PC-3 (cell line): ENCODE measurements at regions of chr17 and their contacts with region 1.

Region 1: DNA sequence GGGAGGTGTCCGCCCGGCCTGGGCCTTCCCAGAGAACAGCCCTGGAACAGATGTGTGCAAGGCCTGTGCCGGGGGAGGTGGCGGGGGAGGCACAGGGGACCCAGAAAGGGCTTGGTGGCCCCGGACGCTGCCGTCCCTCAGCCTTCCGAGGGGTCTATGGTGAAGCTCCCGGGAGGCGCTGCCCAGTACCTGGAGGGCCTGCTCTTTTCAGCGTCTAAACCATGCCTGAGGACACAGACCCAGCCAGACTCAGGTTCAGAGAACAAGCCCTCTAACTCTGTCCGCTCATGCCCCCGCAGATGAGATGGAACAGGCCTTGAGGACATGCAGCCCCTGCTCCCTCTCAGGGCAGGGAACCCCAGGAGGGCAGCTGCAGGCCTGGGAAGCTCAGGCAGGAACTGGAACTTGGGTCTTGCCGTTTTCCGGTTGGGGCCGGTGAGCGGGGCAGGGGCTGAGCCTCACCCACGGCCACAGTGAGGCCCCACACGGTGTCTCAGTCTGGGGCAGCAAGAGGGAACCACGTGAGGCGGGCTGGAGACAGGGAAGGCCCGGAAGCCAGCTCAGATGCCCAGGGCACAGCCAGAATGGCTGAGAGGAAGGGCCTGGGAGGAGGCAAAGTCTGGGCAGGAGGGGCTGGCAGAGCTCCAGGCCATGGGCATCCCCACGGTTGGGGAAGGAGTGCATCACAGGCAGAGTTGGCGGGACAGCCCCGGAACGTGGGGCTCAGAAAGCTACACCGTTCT is 12.5 kb downstream of the SLC16A3 start:
- DNase-seq: peak; percentile 74
- ATAC-seq: peak; percentile 51
- H3K4me3 ChIP-seq: no peak overlapping the region
- H3K27ac ChIP-seq: peak overlapping the region; percentile 68
- H3K4me1 ChIP-seq: peaks cover 42% of the 10 kb centered on the region
- H3K27me3 ChIP-seq: no peaks in the 10 kb centered on the region
- CTCF ChIP-seq: no peak

Region 2: GRCh38 chr17:82205719-82206508 is 35.4 kb before region 1 on chr17:
- CTCF ChIA-PET with region 1: interaction called, 7 read pairs
- POLR2A ChIA-PET with region 1: interaction called, 5 read pairs
- intact Hi-C with region 1: loop called (anchors 5 kb)
- DNase-seq: peak; percentile 95
- ATAC-seq: peak; percentile 70
- H3K4me3 ChIP-seq: peak overlapping the region; percentile 50
- H3K27ac ChIP-seq: peak overlapping the region; percentile 90
- H3K4me1 ChIP-seq: peaks cover 30% of the 10 kb centered on the region
- H3K27me3 ChIP-seq: no peaks in the 10 kb centered on the region
- CTCF ChIP-seq: peak; percentile 94

Region 3: GRCh38 chr17:82273327-82274133 is 32.2 kb after region 1 on chr17 and contains the start of gene CSNK1D:
- CTCF ChIA-PET with region 1: no interaction called
- POLR2A ChIA-PET with region 1: no interaction called
- intact Hi-C with region 1: no loop called
- DNase-seq: peak; percentile 81
- ATAC-seq: peak; percentile 81
- H3K4me3 ChIP-seq: peak within 1 kb of the TSS; percentile 98
- H3K27ac ChIP-seq: peak within 1 kb of the TSS; percentile 81
- H3K4me1 ChIP-seq: peaks cover 49% of the 10 kb centered on the region
- H3K27me3 ChIP-seq: no peaks in the 10 kb centered on the region
- CTCF ChIP-seq: no peak
- total RNA-seq, gene CSNK1D: 58.6 and 73.5 TPM in 2 replicates

Region 4: GRCh38 chr17:82320956-82321927 is 79.9 kb after region 1 on chr17:
- CTCF ChIA-PET with region 1: no interaction called
- POLR2A ChIA-PET with region 1: no interaction called
- intact Hi-C with region 1: loop called (anchors 2 kb)
- DNase-seq: no peak
- ATAC-seq: peak; percentile 45
- H3K4me3 ChIP-seq: no peak overlapping the region
- H3K27ac ChIP-seq: no peak overlapping the region
- H3K4me1 ChIP-seq: no peaks in the 10 kb centered on the region
- H3K27me3 ChIP-seq: no peaks in the 10 kb centered on the region
- CTCF ChIP-seq: peak; percentile 90

Region 5: GRCh38 chr17:82457997-82458864 is 216.9 kb after region 1 on chr17 and contains the start of gene NARF:
- CTCF ChIA-PET with region 1: no interaction called
- POLR2A ChIA-PET with region 1: no interaction called
- intact Hi-C with region 1: loop called (anchors 10 kb)
- DNase-seq: peak; percentile 98
- ATAC-seq: peak; percentile 98
- H3K4me3 ChIP-seq: peak within 1 kb of the TSS; percentile 95
- H3K27ac ChIP-seq: peak within 1 kb of the TSS; percentile 92
- H3K4me1 ChIP-seq: peaks cover 22% of the 10 kb centered on the region
- H3K27me3 ChIP-seq: no peaks in the 10 kb centered on the region
- CTCF ChIP-seq: no peak
- total RNA-seq, gene NARF: 59.5 and 64.6 TPM in 2 replicates